PC-9 (cell line): ENCODE measurements at regions of chr4 and their contacts with region 1.

Region 1: GRCh38 chr4:31557444-31557843 is 837.3 kb downstream of the PCDH7 start:
- DNase-seq: no peak
- H3K4me3 ChIP-seq: no peak overlapping the region
- H3K27ac ChIP-seq: no peak overlapping the region
- H3K4me1 ChIP-seq: no peaks in the 10 kb centered on the region; the same call in 1 of the 2 replicates
- H3K27me3 ChIP-seq: no peaks in the 10 kb centered on the region
- CTCF ChIP-seq: no peak

Region 2: DNA sequence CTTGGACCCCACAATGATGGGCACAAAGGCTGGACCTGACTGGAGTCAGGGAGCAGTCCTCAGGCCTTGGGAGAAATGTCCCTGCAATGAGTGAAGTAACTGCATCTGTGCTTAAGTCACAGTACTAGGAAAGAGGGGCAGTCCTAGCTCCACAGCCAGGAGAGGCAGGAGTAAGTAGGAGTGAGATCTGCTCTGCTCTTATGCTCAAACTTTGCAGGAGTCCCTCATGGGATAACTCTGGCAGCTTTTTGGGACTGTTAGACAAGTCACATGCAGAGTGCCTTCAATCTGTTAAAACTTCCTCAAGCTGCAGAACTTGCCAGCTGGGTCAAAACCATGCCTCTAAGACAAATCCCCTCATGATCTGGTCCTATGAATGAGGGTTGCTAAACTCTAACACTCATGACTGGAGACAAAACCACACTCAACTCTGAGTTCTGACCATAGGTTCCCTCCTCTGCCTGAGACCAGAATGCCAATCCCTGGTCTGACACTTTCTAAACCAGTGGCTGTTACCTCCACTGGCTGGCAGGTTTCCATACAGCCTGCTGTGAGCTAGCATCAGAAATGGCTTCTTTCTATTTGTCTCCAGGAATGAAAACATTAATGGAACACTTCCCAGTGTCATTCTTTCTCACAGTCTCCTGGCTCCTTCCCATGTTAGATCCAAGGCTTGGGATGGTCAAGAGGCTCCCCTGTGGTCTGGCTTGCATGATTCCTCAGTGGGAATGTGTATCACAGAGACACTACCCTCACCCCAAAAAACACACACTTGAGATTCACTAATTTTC is 18.0 kb before region 1 on chr4:
- CTCF ChIA-PET with region 1: no interaction called
- POLR2A ChIA-PET with region 1: interaction called, 4 read pairs
- intact Hi-C with region 1: loop called (anchors 1 kb)
- DNase-seq: no peak
- H3K4me3 ChIP-seq: no peak overlapping the region
- H3K27ac ChIP-seq: no peak overlapping the region
- H3K4me1 ChIP-seq: no peaks in the 10 kb centered on the region
- H3K27me3 ChIP-seq: no peaks in the 10 kb centered on the region
- CTCF ChIP-seq: no peak